Mucosa of descending colon (tissue), 3 donors: ENCODE measurements at regions of chr9 and their contacts with region 1.

Region 1: GRCh38 chr9:38392235-38393127 is at the start of gene ALDH1B1:
- DNase-seq: peak; percentile 89 to 93 (median 92)
- ATAC-seq: peak; percentile 95
- H3K4me3 ChIP-seq: peak within 1 kb of the TSS; percentile 42
- H3K4me1 ChIP-seq: peaks cover 18% of the 10 kb centered on the region
- CTCF ChIP-seq: no peak
- total RNA-seq, gene ALDH1B1: 39.5 to 58.1 (median 52.5) TPM

Region 2: DNA sequence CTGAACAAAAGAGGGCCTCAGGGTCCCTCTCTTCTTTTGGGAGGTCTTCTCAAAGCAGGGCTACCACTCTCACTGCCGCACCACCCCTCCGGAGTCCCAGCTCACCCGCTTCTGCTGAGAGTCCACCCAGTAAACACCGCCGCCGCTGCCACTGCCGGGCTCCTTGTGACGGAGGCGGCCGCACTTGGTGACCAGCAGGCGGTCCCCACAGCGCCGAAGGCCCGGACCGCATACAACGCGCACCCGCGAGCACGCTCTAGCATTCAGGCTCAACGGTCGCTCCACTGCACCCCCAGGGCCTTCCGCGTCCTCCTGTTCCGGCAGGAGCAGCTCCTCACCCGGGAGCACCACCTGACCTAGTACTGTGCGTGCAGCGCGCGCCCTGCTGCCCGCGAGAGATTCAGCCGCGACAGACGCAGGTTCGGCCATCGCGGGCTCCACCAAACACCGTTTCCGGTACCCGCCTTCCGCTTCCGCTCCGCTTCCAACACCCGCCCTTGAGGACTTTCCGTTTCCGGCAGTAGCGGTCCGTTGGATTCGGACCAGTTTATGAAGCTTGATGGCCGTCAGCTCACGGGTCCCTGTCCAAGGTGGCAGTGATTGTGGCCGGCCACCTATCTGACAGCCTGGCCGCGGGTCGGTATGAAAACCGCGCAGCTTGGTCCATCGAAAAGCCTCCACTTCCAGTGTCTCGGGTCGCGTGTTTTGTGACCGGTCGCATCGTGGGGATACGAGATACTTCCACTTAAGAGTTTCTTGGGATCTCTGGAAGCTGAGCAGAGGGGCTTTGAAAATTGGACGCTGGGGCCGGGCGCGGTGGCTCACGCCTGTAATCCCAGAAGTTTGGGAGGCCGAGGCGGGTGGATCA is 607.6 kb before region 1 on chr9 and contains the start of gene EXOSC3:
- intact Hi-C with region 1: loop called in 1 of 2 experiments (anchors 10 kb)
- DNase-seq: peak; percentile 92 to 94 (median 93)
- ATAC-seq: peak; percentile 98
- H3K4me3 ChIP-seq: peak within 1 kb of the TSS; percentile 76
- H3K4me1 ChIP-seq: peaks cover 10% of the 10 kb centered on the region
- CTCF ChIP-seq: no peak
- total RNA-seq, gene EXOSC3: 25.1 to 34.1 (median 32.2) TPM